CD4-positive, alpha-beta memory T cell (primary cell): ENCODE measurements at regions of chr22 and their contacts with region 1.

Region 1: GRCh38 chr22:31211862-31212730 is at the start of gene LIMK2:
- DNase-seq: peak; percentile 93 to 94 (median 94)
- H3K4me3 ChIP-seq: peak within 1 kb of the TSS; percentile 74 to 92
- H3K4me3 Mint-ChIP-seq: peak within 1 kb of the TSS; percentile 89 to 98 (median 90)
- H3K27ac ChIP-seq: peak within 1 kb of the TSS; percentile 81
- H3K27ac Mint-ChIP-seq: peak within 1 kb of the TSS; percentile 76 to 97 (median 94)
- H3K4me1 ChIP-seq: peaks cover 61% of the 10 kb centered on the region
- H3K4me1 Mint-ChIP-seq: peaks cover 43 to 68% (median 50%) of the 10 kb centered on the region in 4 donors
- H3K27me3 ChIP-seq: no peaks in the 10 kb centered on the region
- H3K27me3 Mint-ChIP-seq: no peaks in the 10 kb centered on the region
- total RNA-seq, gene LIMK2: 32.2 to 33.2 TPM

Region 2: GRCh38 chr22:30968924-30969539 is 243.1 kb before region 1 on chr22 and contains the start of gene TUG1:
- CTCF ChIA-PET with region 1: no interaction called
- POLR2A ChIA-PET with region 1: interaction called, 3 read pairs
- intact Hi-C with region 1: loop called (anchors 2 kb)
- DNase-seq: peak; percentile 97 to 99 (median 98)
- H3K4me3 ChIP-seq: peak within 1 kb of the TSS; percentile 68 to 80
- H3K4me3 Mint-ChIP-seq: peak within 1 kb of the TSS; percentile 89 to 96 (median 94)
- H3K27ac ChIP-seq: peak within 1 kb of the TSS; percentile 90
- H3K27ac Mint-ChIP-seq: peak within 1 kb of the TSS; percentile 94 to 98 (median 97)
- H3K4me1 ChIP-seq: peaks cover 39% of the 10 kb centered on the region
- H3K4me1 Mint-ChIP-seq: peaks cover 30 to 69% (median 52%) of the 10 kb centered on the region in 4 donors
- H3K27me3 ChIP-seq: no peaks in the 10 kb centered on the region
- H3K27me3 Mint-ChIP-seq: no peaks in the 10 kb centered on the region
- total RNA-seq, gene TUG1: 129 to 132 TPM

Region 3: DNA sequence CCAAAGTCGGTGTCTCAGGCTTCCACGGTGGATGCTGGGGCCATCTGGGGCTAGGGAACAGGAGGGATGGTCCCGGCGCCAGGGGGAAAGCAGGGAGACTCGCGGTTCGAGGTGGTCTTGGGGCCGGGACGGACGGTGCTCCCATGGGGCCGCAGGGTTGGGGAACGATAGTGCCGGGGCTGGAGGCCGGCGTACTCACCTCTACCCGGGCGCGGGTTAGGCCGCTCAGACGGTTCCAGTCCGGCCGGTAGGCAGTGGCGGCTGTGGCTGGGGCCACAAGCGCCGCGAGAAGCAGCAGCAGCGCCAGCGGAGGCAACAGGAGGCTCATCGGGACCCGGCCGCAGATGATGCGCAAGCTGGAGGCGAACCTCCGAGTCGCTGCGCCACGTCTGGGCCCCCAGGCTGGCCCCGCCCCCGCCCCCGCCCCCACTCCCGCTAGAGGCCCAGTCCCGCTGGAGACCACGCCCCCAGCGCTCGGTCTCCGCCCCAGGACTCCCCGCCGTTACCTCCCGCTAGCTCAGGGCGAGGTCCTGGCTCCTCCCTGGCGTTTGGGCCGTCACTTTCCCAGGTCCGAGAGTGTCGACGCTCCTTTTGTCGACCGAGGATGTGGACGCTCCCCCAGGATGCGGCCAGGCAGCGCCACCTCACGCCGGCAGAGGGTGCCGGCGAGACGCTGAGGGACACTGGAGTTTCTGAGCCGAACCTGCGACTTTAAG is 104.8 kb before region 1 on chr22 and contains the start of gene SELENOM:
- CTCF ChIA-PET with region 1: interaction called, 8 read pairs
- POLR2A ChIA-PET with region 1: interaction called, 8 read pairs
- intact Hi-C with region 1: loop called (anchors 5 kb)
- DNase-seq: peak; percentile 84 to 90 (median 85)
- H3K4me3 ChIP-seq: peak within 1 kb of the TSS; percentile 80 to 97
- H3K4me3 Mint-ChIP-seq: peak within 1 kb of the TSS; percentile 89 to 97 (median 94)
- H3K27ac ChIP-seq: peak within 1 kb of the TSS; percentile 62
- H3K27ac Mint-ChIP-seq: peak within 1 kb of the TSS; percentile 86 to 96 (median 94)
- H3K4me1 ChIP-seq: peaks cover 20% of the 10 kb centered on the region
- H3K4me1 Mint-ChIP-seq: peaks cover 17 to 31% (median 24%) of the 10 kb centered on the region in 4 donors
- H3K27me3 ChIP-seq: no peaks in the 10 kb centered on the region
- H3K27me3 Mint-ChIP-seq: no peaks in the 10 kb centered on the region
- total RNA-seq, gene SELENOM: 64.2 to 68.6 TPM

Region 4: GRCh38 chr22:31139866-31140716 is 72.0 kb before region 1 on chr22 and contains the start of gene PLA2G3:
- CTCF ChIA-PET with region 1: no interaction called
- POLR2A ChIA-PET with region 1: no interaction called
- intact Hi-C with region 1: no loop called
- DNase-seq: no peak
- H3K4me3 ChIP-seq: no peak within 1 kb of the TSS
- H3K4me3 Mint-ChIP-seq: no peak within 1 kb of the TSS
- H3K27ac ChIP-seq: no peak within 1 kb of the TSS
- H3K27ac Mint-ChIP-seq: peak within 1 kb of the TSS in 1 of 7 donors; percentile 47
- H3K4me1 ChIP-seq: no peaks in the 10 kb centered on the region
- H3K4me1 Mint-ChIP-seq: no peaks in the 10 kb centered on the region
- H3K27me3 ChIP-seq: no peaks in the 10 kb centered on the region
- H3K27me3 Mint-ChIP-seq: peaks cover 0 to 4% of the 10 kb centered on the region in 2 donors
- total RNA-seq, gene PLA2G3: not detected

Region 5: DNA sequence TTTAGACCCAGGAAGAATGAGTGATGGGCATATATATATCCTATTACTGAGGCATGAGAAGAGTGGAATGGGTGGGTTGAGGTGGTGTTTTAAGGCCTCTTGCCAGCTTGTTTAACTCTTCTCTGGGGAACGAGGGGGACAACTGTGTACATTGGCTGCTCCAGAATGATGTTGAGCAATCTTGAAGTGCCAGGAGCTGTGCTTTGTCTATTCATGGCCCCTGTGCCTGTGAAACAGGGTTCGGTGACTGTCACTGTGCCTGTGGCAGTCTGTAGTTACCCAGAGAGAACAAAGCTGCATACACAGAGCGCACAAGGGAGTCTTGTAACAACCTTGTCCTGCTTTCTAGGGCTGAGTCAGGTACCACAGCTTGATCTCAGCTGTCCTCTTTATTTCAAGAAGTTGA is 11.7 kb after region 1 on chr22:
- CTCF ChIA-PET with region 1: interaction called, 178 read pairs
- POLR2A ChIA-PET with region 1: interaction called, 75 read pairs
- intact Hi-C with region 1: no loop called
- DNase-seq: no peak
- H3K4me3 ChIP-seq: no peak overlapping the region
- H3K4me3 Mint-ChIP-seq: no peak overlapping the region
- H3K27ac ChIP-seq: no peak overlapping the region
- H3K27ac Mint-ChIP-seq: peak overlapping the region; percentile 54 to 88 (median 76)
- H3K4me1 ChIP-seq: peaks cover 16% of the 10 kb centered on the region
- H3K4me1 Mint-ChIP-seq: peaks cover 23 to 62% (median 44%) of the 10 kb centered on the region in 4 donors
- H3K27me3 ChIP-seq: no peaks in the 10 kb centered on the region
- H3K27me3 Mint-ChIP-seq: no peaks in the 10 kb centered on the region

Region 6: GRCh38 chr22:31248138-31248745 is 36.1 kb after region 1 on chr22:
- CTCF ChIA-PET with region 1: interaction called, 19 read pairs
- POLR2A ChIA-PET with region 1: interaction called, 6 read pairs
- intact Hi-C with region 1: no loop called
- DNase-seq: peak; percentile 61 to 81 (median 69)
- H3K4me3 ChIP-seq: no peak overlapping the region
- H3K4me3 Mint-ChIP-seq: peak overlapping the region; percentile 22 to 85 (median 78)
- H3K27ac ChIP-seq: no peak overlapping the region
- H3K27ac Mint-ChIP-seq: peak overlapping the region in 6 of 7 donors; percentile 61 to 87 (median 78)
- H3K4me1 ChIP-seq: peaks cover 42% of the 10 kb centered on the region
- H3K4me1 Mint-ChIP-seq: peaks cover 22 to 50% (median 27%) of the 10 kb centered on the region in 4 donors
- H3K27me3 ChIP-seq: no peaks in the 10 kb centered on the region
- H3K27me3 Mint-ChIP-seq: no peaks in the 10 kb centered on the region

Region 7: DNA sequence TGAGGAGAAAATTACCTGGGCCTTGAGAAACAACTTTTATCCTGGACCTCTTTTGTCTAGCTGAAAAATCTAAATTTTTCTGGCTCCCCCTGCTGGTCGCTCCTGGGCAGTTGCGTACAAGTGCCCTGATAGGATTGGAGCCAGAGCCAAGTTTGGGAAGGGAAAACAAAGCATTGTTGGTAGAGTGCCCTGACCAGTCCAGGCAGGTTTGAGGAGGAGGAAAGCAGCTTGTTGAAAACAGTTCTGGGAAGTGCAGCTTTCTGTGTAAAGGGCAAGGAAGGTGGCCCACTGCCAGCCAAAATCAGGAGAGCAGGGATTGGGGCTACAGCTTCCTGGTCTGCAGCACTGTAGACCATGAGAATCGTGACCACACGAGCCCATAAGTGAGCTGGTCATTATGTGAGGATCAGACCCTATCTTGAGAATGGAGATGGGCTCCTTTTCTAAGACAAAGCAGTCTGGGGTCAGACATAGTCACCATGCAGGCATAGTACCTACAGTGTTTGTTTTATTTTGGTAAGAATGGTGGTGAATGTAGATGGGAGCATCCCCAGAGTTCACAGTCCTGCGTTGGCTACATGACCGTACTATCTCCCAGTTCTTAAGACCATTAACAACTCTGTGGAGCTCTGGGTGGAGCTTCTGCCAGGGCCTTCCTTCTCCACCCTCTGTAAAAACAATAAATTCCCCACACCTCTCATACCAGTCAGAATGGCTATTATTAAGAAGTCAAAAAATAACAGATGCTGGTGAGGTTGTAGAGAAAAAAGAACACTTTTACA is 101.5 kb after region 1 on chr22:
- CTCF ChIA-PET with region 1: interaction called, 57 read pairs
- POLR2A ChIA-PET with region 1: interaction called, 18 read pairs
- intact Hi-C with region 1: loop called (anchors 1 kb)
- DNase-seq: peak; percentile 58 to 68 (median 60)
- H3K4me3 ChIP-seq: no peak overlapping the region
- H3K4me3 Mint-ChIP-seq: peak overlapping the region in 1 of 8 donors; percentile 10
- H3K27ac ChIP-seq: no peak overlapping the region
- H3K27ac Mint-ChIP-seq: peak overlapping the region in 5 of 7 donors; percentile 37 to 91 (median 78)
- H3K4me1 ChIP-seq: peaks cover 25% of the 10 kb centered on the region
- H3K4me1 Mint-ChIP-seq: peaks cover 6 to 20% (median 14%) of the 10 kb centered on the region in 4 donors
- H3K27me3 ChIP-seq: no peaks in the 10 kb centered on the region
- H3K27me3 Mint-ChIP-seq: no peaks in the 10 kb centered on the region

Region 8: DNA sequence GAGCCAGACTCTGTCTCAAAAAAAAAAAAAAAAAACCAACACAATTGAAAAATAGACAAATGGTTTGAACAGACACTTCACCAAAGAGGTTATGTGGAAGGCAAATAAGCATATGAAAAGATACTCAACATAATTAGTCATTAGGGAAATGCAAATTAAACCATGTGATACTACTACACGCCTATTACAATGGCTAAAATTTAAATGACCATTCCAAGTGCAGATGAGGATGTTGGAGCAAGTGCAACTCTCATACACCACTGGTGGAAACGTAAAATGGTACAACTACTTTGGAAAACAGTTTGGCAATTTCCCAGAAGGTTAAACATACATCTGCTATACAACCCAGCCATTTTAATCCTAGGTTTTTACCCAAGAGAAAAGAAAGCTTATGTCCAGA is 253.2 kb after region 1 on chr22:
- CTCF ChIA-PET with region 1: no interaction called
- POLR2A ChIA-PET with region 1: no interaction called
- intact Hi-C with region 1: no loop called
- DNase-seq: no peak
- H3K4me3 ChIP-seq: no peak overlapping the region
- H3K4me3 Mint-ChIP-seq: no peak overlapping the region
- H3K27ac ChIP-seq: no peak overlapping the region
- H3K27ac Mint-ChIP-seq: no peak overlapping the region
- H3K4me1 ChIP-seq: no peaks in the 10 kb centered on the region
- H3K4me1 Mint-ChIP-seq: peaks cover 0 to 9% (median 0%) of the 10 kb centered on the region in 4 donors
- H3K27me3 ChIP-seq: no peaks in the 10 kb centered on the region
- H3K27me3 Mint-ChIP-seq: no peaks in the 10 kb centered on the region

Region 9: GRCh38 chr22:31734512-31734911 is 522.4 kb after region 1 on chr22:
- CTCF ChIA-PET with region 1: no interaction called
- POLR2A ChIA-PET with region 1: no interaction called
- intact Hi-C with region 1: no loop called
- DNase-seq: no peak
- H3K4me3 ChIP-seq: no peak overlapping the region
- H3K4me3 Mint-ChIP-seq: no peak overlapping the region
- H3K27ac ChIP-seq: no peak overlapping the region
- H3K27ac Mint-ChIP-seq: peak overlapping the region in 1 of 7 donors; percentile 42
- H3K4me1 ChIP-seq: peaks cover 8% of the 10 kb centered on the region
- H3K4me1 Mint-ChIP-seq: peaks cover 22 to 36% (median 28%) of the 10 kb centered on the region in 4 donors
- H3K27me3 ChIP-seq: no peaks in the 10 kb centered on the region
- H3K27me3 Mint-ChIP-seq: no peaks in the 10 kb centered on the region